ENCODE measurements at regions of chr1 and their contacts with region 1.

Region 1: DNA sequence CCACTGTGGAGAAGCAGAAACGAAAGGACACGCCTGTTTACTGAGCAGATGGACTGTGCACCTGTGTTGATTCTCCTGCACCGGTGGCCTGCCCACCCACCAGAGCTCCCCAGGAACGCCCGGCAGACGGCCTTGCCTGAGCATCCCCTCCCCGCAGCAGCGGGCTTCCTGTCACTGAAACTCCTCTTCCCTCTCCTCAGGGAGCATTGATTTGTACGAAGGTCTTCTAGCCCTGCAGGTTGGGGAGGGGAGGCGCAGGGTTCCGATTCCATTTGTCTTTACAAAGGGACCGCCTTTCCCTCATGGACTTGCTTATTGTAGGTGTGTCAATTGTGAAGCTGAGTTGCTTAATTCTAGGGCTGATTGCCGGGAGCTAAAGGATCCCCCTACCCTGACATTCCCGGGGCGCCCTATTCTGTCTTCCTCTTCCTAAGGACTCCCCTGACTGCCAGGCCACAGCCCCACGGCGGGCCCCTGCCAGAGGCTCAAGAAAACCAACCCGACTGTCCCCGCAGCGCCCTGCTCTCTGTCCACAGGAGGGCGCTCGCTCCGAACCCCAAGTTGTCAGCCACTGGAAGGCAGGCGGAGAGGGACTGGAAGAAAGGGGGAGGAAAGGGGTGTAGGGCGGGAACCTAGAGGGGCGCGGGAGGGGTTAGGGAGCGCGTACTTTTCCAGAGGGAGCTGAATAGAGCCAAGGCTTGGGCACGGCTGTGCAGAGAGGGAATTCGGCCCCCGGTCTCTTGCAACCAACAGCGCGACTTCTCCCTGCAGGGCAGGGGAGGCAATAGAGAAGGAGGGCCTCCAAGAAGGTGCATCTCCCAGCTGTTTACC is 2.8 kb downstream of the S100A6 start:
- DNase-seq: peak; percentile 79 to 84 (median 82)
- H3K4me3 ChIP-seq: peak overlapping the region in 2 of 7 experiments; percentile 30 to 46
- H3K27ac ChIP-seq: no peak overlapping the region
- H3K4me1 ChIP-seq: peaks cover 8 to 53% (median 43%) of the 10 kb centered on the region in 4 experiments
- H3K27me3 ChIP-seq: no peaks in the 10 kb centered on the region

Region 2: GRCh38 chr1:153363641-153364554 is 169.1 kb before region 1 on chr1:
- CTCF ChIA-PET with region 1: no interaction called
- POLR2A ChIA-PET with region 1: no interaction called
- DNase-seq: no peak
- H3K4me3 ChIP-seq: no peak overlapping the region
- H3K27ac ChIP-seq: no peak overlapping the region
- H3K4me1 ChIP-seq: peaks cover 0 to 22% (median 6%) of the 10 kb centered on the region in 4 experiments
- H3K27me3 ChIP-seq: no peaks in the 10 kb centered on the region

Region 3: DNA sequence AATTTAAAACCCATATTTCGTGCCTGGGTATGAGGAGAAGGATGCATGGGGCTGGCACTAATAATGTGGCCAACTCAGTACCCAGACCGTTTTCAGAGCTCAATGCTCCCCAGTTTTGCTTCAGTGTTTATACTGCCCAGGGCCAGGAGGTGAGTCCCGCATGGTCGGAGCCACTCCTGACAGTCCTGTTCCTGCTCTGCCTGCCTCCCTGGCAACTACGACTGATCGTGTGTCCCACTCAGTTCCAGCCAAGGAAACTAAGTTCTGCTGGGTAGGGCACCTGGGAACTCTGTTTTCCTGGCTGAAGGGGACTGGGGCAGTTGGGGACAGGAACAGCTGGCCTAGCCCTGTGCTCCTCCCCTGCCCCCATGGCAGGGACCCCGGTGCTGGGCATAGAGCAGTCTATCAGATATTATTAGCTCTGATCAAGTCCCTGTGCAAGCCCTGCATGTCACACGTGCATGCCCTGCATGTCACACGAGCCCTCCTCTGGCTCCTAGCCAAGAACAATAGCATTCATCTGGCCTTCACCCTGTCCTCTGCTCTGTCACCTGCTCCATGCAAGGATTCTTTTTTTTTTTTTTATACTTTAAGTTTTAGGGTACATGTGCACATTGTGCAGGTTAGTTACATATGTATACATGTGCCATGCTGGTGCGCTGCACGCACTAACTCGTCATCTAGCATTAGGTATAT is 91.6 kb before region 1 on chr1:
- CTCF ChIA-PET with region 1: no interaction called
- POLR2A ChIA-PET with region 1: no interaction called
- DNase-seq: no peak
- H3K4me3 ChIP-seq: no peak overlapping the region
- H3K27ac ChIP-seq: no peak overlapping the region
- H3K4me1 ChIP-seq: peaks cover 0 to 6% (median 5%) of the 10 kb centered on the region in 4 experiments
- H3K27me3 ChIP-seq: peaks cover 0 to 25% (median 0%) of the 10 kb centered on the region in 5 experiments

Region 4: DNA sequence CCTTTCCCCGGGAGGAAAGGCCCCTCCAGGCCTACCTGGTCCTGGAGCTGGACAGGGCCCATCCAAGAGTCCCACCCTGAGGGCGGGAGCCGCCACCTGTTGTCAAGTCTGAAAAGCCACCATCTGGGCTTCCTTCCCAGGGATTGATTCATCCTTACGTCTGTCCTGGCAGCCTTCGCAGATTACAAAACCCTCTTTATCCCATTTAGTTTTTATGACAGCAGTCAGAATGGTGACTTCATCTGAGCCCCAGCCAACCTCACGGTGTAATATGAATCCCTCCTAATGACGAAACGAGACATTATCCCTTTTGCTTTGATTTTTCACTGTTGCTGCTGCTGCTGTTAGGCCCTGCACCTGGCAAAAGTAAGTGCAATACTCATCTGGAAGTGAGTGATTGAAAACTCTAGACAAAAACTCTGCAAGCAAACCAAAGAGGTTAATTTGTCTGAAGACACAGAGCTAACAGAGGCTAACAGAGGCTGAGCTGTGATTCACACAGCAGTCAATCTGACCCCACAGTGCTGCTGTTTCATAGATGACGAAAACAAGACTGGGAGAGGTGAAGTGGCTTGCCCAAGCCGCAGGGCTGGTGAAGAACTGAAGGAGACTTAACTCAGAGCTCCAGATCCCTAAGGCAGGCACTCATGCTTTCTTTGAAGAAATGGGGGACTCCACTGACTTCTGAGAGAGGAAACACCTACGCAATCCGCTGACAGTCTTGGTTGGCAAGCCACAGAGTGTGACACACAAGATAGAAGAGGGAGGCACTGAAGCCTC is 42.5 kb before region 1 on chr1:
- CTCF ChIA-PET with region 1: no interaction called
- POLR2A ChIA-PET with region 1: no interaction called
- DNase-seq: peak; percentile 42 to 84 (median 84)
- H3K4me3 ChIP-seq: no peak overlapping the region
- H3K27ac ChIP-seq: no peak overlapping the region
- H3K4me1 ChIP-seq: peaks cover 0 to 18% (median 11%) of the 10 kb centered on the region in 4 experiments
- H3K27me3 ChIP-seq: peaks cover 0 to 5% (median 1%) of the 10 kb centered on the region in 5 experiments

Region 5: GRCh38 chr1:153510984-153511410 is 22.0 kb before region 1 on chr1:
- CTCF ChIA-PET with region 1: interaction called, 51 read pairs
- POLR2A ChIA-PET with region 1: no interaction called
- DNase-seq: peak; percentile 61 to 74 (median 63)
- H3K4me3 ChIP-seq: no peak overlapping the region
- H3K27ac ChIP-seq: no peak overlapping the region
- H3K4me1 ChIP-seq: peaks cover 0 to 14% (median 9%) of the 10 kb centered on the region in 4 experiments
- H3K27me3 ChIP-seq: no peaks in the 10 kb centered on the region

Region 6: GRCh38 chr1:153520230-153520629 is 12.8 kb before region 1 on chr1:
- CTCF ChIA-PET with region 1: interaction called, 51 read pairs
- POLR2A ChIA-PET with region 1: no interaction called
- DNase-seq: no peak
- H3K4me3 ChIP-seq: no peak overlapping the region
- H3K27ac ChIP-seq: no peak overlapping the region
- H3K4me1 ChIP-seq: peaks cover 0 to 30% (median 16%) of the 10 kb centered on the region in 4 experiments
- H3K27me3 ChIP-seq: no peaks in the 10 kb centered on the region

Region 7: DNA sequence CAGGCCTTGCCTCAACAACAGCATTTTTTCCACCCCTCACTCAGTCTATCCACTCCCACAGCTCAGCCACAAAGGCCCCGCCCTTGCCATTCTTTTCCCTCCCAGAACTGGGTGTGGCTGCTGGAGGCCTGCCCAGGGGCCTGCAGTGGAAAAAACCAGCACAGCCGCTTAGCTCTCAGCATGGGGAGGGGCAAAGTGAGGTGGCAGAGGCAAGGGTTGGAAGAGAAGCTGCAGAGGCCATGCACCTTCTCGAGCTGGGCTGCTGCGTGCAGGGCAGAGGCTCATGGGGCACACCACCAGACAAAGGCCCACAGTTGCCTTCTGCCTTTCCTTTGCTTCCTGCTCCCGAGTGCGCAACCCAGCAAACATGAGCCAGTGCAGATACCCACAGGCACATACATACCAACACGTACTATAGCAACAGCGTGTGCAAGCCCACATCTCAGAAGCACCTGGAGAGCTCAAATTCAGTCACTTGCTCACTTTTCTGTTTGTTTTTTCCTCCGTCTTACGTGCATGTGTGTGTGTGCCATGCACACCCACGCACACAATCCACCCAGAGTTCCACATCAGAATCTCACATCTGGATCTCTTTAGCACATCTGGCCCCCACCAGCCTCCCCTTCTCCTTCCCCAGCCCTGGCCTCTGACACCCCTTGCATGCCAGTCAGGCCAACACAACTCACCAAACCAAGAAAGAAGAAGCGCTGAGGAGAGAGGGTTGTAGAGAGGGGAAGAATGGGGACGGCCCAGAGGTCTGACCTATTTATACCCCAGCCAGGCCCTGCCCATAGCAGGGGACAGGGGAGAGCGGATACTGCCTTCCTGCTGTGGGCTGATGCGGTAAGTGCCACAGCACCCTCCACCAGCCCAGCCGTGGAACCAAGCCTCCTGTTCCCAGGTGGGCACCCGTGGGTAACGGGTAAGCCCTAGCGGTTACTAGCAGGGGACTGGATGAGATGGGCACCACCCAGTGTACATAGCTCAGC is 12.4 kb after region 1 on chr1 and contains the start of gene S100A4:
- CTCF ChIA-PET with region 1: interaction called, 64 read pairs
- POLR2A ChIA-PET with region 1: interaction called, 10 read pairs
- DNase-seq: peak; percentile 83 to 93 (median 92)
- H3K4me3 ChIP-seq: peak within 1 kb of the TSS; percentile 21 to 87 (median 65)
- H3K27ac ChIP-seq: peak within 1 kb of the TSS; percentile 51 to 77
- H3K4me1 ChIP-seq: peaks cover 5 to 100% (median 63%) of the 10 kb centered on the region in 4 experiments
- H3K27me3 ChIP-seq: no peaks in the 10 kb centered on the region

Region 8: GRCh38 chr1:153566440-153567379 is 33.7 kb after region 1 on chr1:
- CTCF ChIA-PET with region 1: interaction called, 169 read pairs
- POLR2A ChIA-PET with region 1: interaction called, 11 read pairs
- DNase-seq: peak; percentile 92 to 98 (median 98)
- H3K4me3 ChIP-seq: peak overlapping the region in 4 of 7 experiments; percentile 16 to 57 (median 30)
- H3K27ac ChIP-seq: peak overlapping the region; percentile 47 to 80
- H3K4me1 ChIP-seq: peaks cover 3 to 53% (median 33%) of the 10 kb centered on the region in 4 experiments
- H3K27me3 ChIP-seq: no peaks in the 10 kb centered on the region

Region 9: GRCh38 chr1:153626922-153627796 is 94.2 kb after region 1 on chr1 and contains the start of gene S100A13:
- CTCF ChIA-PET with region 1: interaction called, 13 read pairs
- POLR2A ChIA-PET with region 1: no interaction called
- DNase-seq: peak in 2 of 3 donors; percentile 68 to 70
- H3K4me3 ChIP-seq: peak within 1 kb of the TSS in 4 of 7 experiments; percentile 22 to 66 (median 42)
- H3K27ac ChIP-seq: peak within 1 kb of the TSS in 1 of 2 experiments; percentile 67
- H3K4me1 ChIP-seq: peaks cover 0 to 22% (median 11%) of the 10 kb centered on the region in 4 experiments
- H3K27me3 ChIP-seq: peaks cover 0 to 2% (median 0%) of the 10 kb centered on the region in 5 experiments